Aorta (tissue), 5 donors: ENCODE measurements at regions of chr11 and their contacts with region 1.

Region 1: DNA sequence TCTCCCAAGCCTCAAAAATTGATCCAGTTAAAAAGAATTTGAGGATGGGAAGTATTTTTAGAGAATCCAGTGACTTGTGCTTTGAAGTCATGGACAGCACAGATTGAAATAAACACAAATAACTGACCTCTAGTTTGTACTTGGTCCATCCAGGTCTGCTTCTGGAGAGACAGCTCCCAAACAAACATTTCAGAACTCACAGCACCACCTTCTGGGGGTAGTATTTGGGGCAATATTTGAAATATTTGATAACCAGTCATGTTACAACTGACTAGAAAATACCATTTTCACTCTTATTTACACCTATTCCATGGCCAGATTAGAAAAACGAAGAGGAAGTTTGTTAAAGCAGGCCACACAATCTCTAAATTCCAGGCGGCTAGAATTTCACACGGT is 56.2 kb downstream of the CTSC start:
- DNase-seq: no peak
- ATAC-seq: no peak
- H3K4me3 ChIP-seq: no peak overlapping the region
- H3K27ac ChIP-seq: no peak overlapping the region
- H3K4me1 ChIP-seq: peaks cover 0 to 5% of the 10 kb centered on the region in 2 donors
- H3K27me3 ChIP-seq: no peaks in the 10 kb centered on the region

Region 2: GRCh38 chr11:88320149-88320559 is 38.8 kb after region 1 on chr11:
- intact Hi-C with region 1: loop called in 1 of 2 experiments (anchors 5 kb)
- DNase-seq: no peak
- ATAC-seq: no peak
- H3K4me3 ChIP-seq: no peak overlapping the region
- H3K27ac ChIP-seq: no peak overlapping the region
- H3K4me1 ChIP-seq: peaks cover 0 to 2% of the 10 kb centered on the region in 2 donors
- H3K27me3 ChIP-seq: no peaks in the 10 kb centered on the region